ENCODE measurements at regions of chr21 and their contacts with region 1.

Region 1: DNA sequence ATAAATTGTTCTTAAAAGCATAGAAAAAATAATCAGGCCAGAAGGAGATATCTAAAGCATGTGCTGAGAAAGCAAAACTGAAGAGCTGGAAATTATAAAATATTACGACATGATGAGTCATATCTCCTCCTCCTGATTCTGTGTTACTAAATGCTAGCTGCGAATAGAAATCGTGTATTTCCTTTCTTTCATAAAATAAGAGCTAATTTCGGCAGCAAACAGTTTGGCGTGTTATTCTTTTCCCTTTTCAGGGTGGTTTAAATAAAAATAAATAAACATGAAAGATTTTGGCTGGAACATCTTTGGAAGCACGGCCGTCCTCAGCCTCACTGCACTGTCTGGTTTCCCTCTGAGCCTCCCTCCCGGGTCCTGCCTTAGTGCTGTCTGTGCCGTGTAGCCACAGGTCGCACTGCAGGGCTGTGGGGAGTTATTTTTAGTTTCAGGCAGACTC is 56.0 kb downstream of the ADARB1 start:
- DNase-seq: peak; percentile 85
- H3K4me3 ChIP-seq: peak overlapping the region; percentile 67
- H3K27ac ChIP-seq: peak overlapping the region; percentile 83
- H3K4me1 ChIP-seq: peaks cover 41% of the 10 kb centered on the region
- H3K27me3 ChIP-seq: no peaks in the 10 kb centered on the region

Region 2: DNA sequence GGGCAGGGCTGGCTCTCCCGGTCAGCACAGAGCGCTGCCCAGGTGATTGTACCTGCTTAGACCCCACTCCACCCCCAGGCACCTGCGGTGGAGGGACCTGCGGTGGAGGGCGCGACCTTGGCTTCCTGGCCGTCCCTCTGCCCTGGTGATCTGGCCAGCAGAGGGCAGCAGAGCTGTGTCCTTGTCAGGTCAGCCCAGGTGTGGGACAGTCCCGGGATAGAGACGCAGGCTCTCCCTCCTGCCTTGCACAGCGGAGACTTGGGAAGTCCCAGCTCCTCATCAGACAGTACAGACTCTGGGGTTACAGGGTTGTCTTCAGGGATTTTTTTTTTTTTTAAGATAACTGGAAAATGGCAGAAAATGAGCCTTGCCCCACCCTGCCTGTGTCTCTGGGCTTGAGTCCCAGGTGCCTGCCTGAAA is 180.6 kb before region 1 on chr21:
- in situ Hi-C with region 1: loop called (anchors 5 kb)
- DNase-seq: peak; percentile 71
- H3K4me3 ChIP-seq: no peak overlapping the region
- H3K27ac ChIP-seq: no peak overlapping the region
- H3K4me1 ChIP-seq: no peaks in the 10 kb centered on the region
- H3K27me3 ChIP-seq: no peaks in the 10 kb centered on the region

Region 3: GRCh38 chr21:45064618-45065399 is 65.5 kb before region 1 on chr21:
- in situ Hi-C with region 1: loop called (anchors 10 kb)
- DNase-seq: peak; percentile 26
- H3K4me3 ChIP-seq: no peak overlapping the region
- H3K27ac ChIP-seq: no peak overlapping the region
- H3K4me1 ChIP-seq: no peaks in the 10 kb centered on the region
- H3K27me3 ChIP-seq: no peaks in the 10 kb centered on the region

Measured in GM23248 (cell line).